ENCODE measurements at regions of chr14 and their contacts with region 1.

Region 1: DNA sequence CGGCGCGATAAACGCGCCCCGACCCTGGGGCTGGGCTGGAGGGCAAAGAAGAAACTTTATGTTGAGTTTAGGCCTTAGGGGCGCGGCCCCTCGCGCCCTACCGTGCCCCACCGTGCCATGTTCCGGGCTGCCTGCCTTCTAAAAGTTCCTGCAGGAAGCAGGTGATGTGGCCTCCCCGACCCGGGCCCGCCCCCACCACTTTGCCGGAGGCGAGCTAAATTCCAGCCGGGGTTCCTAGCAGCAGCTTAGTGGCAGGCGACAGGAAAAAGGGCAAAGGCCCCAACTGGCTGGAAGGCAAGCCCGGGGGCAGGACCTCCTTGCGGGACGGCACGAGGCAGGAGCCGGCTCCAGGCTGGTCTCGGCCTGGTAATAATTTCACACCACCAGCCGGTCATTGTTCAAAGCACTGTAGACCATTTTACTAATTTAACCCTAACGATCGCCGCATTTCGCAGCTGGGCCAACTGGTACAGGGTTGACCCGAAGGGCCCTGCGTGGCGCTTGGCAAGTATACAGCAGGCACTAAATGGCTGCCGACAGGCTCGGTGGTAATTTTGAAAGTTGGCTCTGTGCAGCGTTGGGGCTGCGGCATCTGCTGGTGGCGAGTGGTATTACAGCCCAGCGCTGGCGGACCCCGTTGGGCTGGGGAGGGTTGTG is 895 bp upstream of the CCDC88C start:
- DNase-seq: peak; percentile 73 to 93 (median 84)
- ATAC-seq: peak; percentile 32
- H3K4me3 ChIP-seq: peak overlapping the region; percentile 47 to 48
- H3K4me3 Mint-ChIP-seq: peak overlapping the region; percentile 80
- H3K27ac ChIP-seq: peak overlapping the region; percentile 19 to 60
- H3K27ac Mint-ChIP-seq: peak overlapping the region; percentile 92
- H3K4me1 ChIP-seq: peaks cover 28% of the 10 kb centered on the region
- H3K4me1 Mint-ChIP-seq: peaks cover 40% of the 10 kb centered on the region
- H3K27me3 ChIP-seq: no peaks in the 10 kb centered on the region
- H3K27me3 Mint-ChIP-seq: no peaks in the 10 kb centered on the region
- CTCF ChIP-seq: peak; percentile 93

Region 2: GRCh38 chr14:91060351-91061055 is 358.0 kb before region 1 on chr14 and contains the start of gene RPS6KA5:
- CTCF ChIA-PET with region 1: no interaction called
- POLR2A ChIA-PET with region 1: no interaction called
- intact Hi-C with region 1: loop called in 1 of 2 experiments (anchors 5 kb)
- DNase-seq: peak; percentile 99 to 100 (median 100)
- ATAC-seq: peak; percentile 82
- H3K4me3 ChIP-seq: peak within 1 kb of the TSS; percentile 66 to 84
- H3K4me3 Mint-ChIP-seq: peak within 1 kb of the TSS; percentile 81
- H3K27ac ChIP-seq: peak within 1 kb of the TSS; percentile 94 to 96
- H3K27ac Mint-ChIP-seq: peak within 1 kb of the TSS; percentile 35
- H3K4me1 ChIP-seq: peaks cover 38% of the 10 kb centered on the region
- H3K4me1 Mint-ChIP-seq: peaks cover 55% of the 10 kb centered on the region
- H3K27me3 ChIP-seq: no peaks in the 10 kb centered on the region
- H3K27me3 Mint-ChIP-seq: no peaks in the 10 kb centered on the region
- CTCF ChIP-seq: no peak
- total RNA-seq, gene RPS6KA5: 17.7 to 18.3 TPM

Region 3: GRCh38 chr14:91249841-91250616 is 168.5 kb before region 1 on chr14:
- CTCF ChIA-PET with region 1: interaction called, 4 read pairs
- POLR2A ChIA-PET with region 1: interaction called, 4 read pairs
- intact Hi-C with region 1: loop called in 1 of 2 experiments (anchors 5 kb)
- DNase-seq: peak in 5 of 9 experiments; percentile 28 to 78 (median 45)
- ATAC-seq: no peak
- H3K4me3 ChIP-seq: no peak overlapping the region
- H3K4me3 Mint-ChIP-seq: peak overlapping the region; percentile 47
- H3K27ac ChIP-seq: peak overlapping the region; percentile 43 to 66
- H3K27ac Mint-ChIP-seq: peak overlapping the region; percentile 92
- H3K4me1 ChIP-seq: peaks cover 70% of the 10 kb centered on the region
- H3K4me1 Mint-ChIP-seq: peaks cover 78% of the 10 kb centered on the region
- H3K27me3 ChIP-seq: no peaks in the 10 kb centered on the region
- H3K27me3 Mint-ChIP-seq: no peaks in the 10 kb centered on the region
- CTCF ChIP-seq: no peak

Region 4: DNA sequence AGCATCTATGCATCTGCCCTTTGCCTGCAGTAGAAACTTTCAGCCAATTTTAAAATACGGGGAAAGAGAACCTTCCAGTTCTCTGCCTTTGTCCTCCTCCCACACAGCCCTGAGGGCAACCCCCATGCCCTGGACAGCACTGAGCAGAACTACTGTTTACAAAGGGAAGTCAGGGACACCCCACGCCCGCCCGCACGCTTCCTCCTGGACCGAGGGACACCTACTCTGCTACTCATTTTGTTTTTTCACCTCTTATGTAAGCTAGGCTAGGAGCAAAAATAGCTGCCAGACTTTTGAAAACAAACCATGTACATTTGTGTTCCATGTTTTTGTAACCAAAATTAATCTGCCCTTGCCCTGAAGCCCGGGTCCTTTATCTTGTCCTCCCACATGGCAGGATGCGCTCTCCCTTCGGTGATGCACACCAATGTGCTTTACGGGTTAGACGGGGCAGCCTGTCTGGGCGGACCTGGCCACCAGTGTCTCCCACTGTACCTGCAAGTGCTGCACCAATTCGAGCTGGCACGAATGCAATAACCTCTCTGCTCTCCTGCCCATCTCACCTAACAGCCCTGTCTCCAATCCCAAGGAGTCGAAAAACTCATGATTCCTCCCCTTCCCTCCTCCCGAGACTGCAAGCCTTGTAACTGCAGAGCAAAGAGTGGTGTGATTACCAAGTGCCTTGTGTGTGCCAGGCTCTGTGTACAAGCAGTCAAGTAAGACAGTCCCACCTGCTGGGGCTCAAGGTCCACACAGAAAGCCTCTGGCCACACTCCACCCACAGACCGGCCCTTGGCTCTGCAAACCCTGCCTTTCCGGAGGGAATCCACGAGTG is 86.1 kb before region 1 on chr14:
- CTCF ChIA-PET with region 1: interaction called, 136 read pairs
- POLR2A ChIA-PET with region 1: interaction called, 67 read pairs
- intact Hi-C with region 1: no loop called
- DNase-seq: no peak
- ATAC-seq: no peak
- H3K4me3 ChIP-seq: no peak overlapping the region
- H3K4me3 Mint-ChIP-seq: peak overlapping the region; percentile 29
- H3K27ac ChIP-seq: peak overlapping the region; percentile 33 to 95
- H3K27ac Mint-ChIP-seq: peak overlapping the region; percentile 99
- H3K4me1 ChIP-seq: peaks cover 63% of the 10 kb centered on the region
- H3K4me1 Mint-ChIP-seq: peaks cover 70% of the 10 kb centered on the region
- H3K27me3 ChIP-seq: no peaks in the 10 kb centered on the region
- H3K27me3 Mint-ChIP-seq: no peaks in the 10 kb centered on the region
- CTCF ChIP-seq: no peak

Region 5: GRCh38 chr14:91373591-91374254 is 44.8 kb before region 1 on chr14:
- CTCF ChIA-PET with region 1: interaction called, 18 read pairs
- POLR2A ChIA-PET with region 1: interaction called, 81 read pairs
- intact Hi-C with region 1: loop called (anchors 1 to 2 kb)
- DNase-seq: peak in 7 of 9 experiments; percentile 38 to 87 (median 65)
- ATAC-seq: peak; percentile 53
- H3K4me3 ChIP-seq: peak overlapping the region; percentile 45 to 58
- H3K4me3 Mint-ChIP-seq: peak overlapping the region; percentile 87
- H3K27ac ChIP-seq: peak overlapping the region; percentile 57 to 79
- H3K27ac Mint-ChIP-seq: peak overlapping the region; percentile 95
- H3K4me1 ChIP-seq: peaks cover 98% of the 10 kb centered on the region
- H3K4me1 Mint-ChIP-seq: peaks cover 99% of the 10 kb centered on the region
- H3K27me3 ChIP-seq: no peaks in the 10 kb centered on the region
- H3K27me3 Mint-ChIP-seq: no peaks in the 10 kb centered on the region
- CTCF ChIP-seq: no peak

Region 6: GRCh38 chr14:91402771-91403600 is 15.5 kb before region 1 on chr14:
- CTCF ChIA-PET with region 1: interaction called, 48 read pairs
- POLR2A ChIA-PET with region 1: interaction called, 168 read pairs
- intact Hi-C with region 1: loop called (anchors 1 kb)
- DNase-seq: peak in 3 of 9 experiments; percentile 54 to 70 (median 60)
- ATAC-seq: peak; percentile 32
- H3K4me3 ChIP-seq: peak overlapping the region; percentile 39 to 43
- H3K4me3 Mint-ChIP-seq: peak overlapping the region; percentile 80
- H3K27ac ChIP-seq: peak overlapping the region; percentile 60 to 89
- H3K27ac Mint-ChIP-seq: peak overlapping the region; percentile 94
- H3K4me1 ChIP-seq: peaks cover 92% of the 10 kb centered on the region
- H3K4me1 Mint-ChIP-seq: peaks cover 88% of the 10 kb centered on the region
- H3K27me3 ChIP-seq: no peaks in the 10 kb centered on the region
- H3K27me3 Mint-ChIP-seq: no peaks in the 10 kb centered on the region
- CTCF ChIP-seq: no peak

Measured in CD8-positive, alpha-beta T cell (primary cell).